ENCODE measurements at regions of chr11 and their contacts with region 1.

Region 1: DNA sequence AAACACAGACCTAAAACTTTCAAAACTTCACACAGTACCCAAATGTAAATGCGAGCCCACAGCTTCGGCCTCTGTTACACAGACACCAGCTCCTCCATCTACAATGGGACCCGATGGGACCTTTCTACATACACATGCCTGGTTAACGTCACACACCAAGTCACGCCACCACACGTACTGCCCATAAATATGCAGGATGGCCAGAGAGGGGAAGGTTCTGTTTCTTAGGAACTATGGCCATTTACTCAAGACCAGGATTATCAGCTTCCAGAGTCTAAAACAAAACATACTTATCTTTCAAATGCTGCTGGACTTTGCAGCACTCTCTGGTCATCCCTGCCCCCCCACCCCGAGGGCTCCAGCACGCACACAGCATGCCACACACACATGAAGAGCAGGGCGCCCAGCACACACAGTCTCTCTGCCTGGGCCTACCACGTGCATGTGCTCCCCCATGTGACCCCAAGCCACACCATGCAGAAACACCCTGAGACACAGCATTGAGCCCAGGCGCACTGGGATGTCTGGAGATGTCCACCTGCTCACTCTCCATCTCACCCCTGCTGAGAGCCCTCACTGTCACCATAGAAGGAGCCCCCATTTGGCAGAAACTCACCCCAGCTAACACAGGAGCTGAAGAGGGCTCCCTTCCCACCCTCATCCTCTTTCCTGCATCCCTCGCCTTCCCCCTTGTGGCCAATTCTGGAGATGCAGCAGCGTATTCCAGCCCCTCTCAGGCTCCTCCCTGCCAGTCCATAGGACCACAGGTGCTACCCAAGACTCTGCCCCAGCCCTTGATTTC is 61.8 kb downstream of the SLC22A12 start:
- DNase-seq: peak in 3 of 4 donors; percentile 70 to 82 (median 73)
- ATAC-seq: peak; percentile 83
- H3K4me3 ChIP-seq: no peak overlapping the region
- H3K27ac ChIP-seq: no peak overlapping the region
- H3K4me1 ChIP-seq: peaks cover 0 to 29% of the 10 kb centered on the region in 2 donors
- H3K27me3 ChIP-seq: peaks cover 0 to 12% of the 10 kb centered on the region in 2 donors
- CTCF ChIP-seq: peak; percentile 82 to 89

Region 2: GRCh38 chr11:64553551-64554201 is 99.1 kb before region 1 on chr11:
- intact Hi-C with region 1: loop called in 1 of 2 experiments (anchors 5 kb)
- DNase-seq: peak in 3 of 4 donors; percentile 57 to 70 (median 61)
- ATAC-seq: peak; percentile 87
- H3K4me3 ChIP-seq: no peak overlapping the region
- H3K27ac ChIP-seq: peak overlapping the region in 1 of 2 donors; percentile 63
- H3K4me1 ChIP-seq: peaks cover 0 to 6% of the 10 kb centered on the region in 2 donors
- H3K27me3 ChIP-seq: peaks cover 0 to 7% of the 10 kb centered on the region in 2 donors
- CTCF ChIP-seq: peak; percentile 95 to 99

Measured in left lung (tissue), 14 donors.